Panc1 (cell line): ENCODE measurements at regions of chr4 and their contacts with region 1.

Region 1: DNA sequence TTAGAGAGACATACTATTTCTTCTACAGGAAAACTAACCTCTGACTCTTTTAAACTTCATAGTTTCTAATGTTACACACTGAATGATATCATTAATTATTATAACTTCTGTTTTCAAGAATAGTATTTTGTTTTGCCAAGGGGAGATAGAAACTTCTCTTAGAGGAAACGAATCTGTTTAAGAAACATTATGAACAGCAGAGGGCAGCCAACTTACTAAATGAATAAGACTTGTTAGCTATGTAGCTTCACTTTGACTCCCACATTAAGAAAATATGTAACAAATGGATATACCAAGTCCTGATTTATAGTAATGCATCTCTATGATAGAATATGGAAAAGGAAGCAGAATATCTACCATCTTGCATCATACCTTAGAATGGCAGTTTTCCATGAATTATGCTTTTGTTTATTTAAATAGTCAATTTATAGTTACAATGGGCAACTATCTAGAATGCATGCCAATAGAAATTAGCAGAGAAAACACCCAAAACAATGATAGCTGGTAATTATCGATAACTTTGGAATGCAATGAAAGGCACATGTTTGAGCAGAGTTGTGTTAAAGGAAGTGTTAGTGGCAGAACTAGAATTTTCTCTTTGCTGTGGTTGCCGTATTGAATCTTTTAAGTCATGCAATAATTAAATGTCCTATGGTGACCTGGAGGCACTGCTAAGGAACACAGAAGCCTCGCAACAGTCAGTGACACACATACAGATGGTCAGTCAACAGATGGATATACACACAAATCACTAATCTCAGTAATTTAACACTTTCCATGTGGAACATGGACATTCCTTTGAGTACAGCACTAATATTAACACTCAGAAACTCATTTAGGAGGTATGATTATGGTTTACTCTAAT is 105.7 kb upstream of the PDLIM3 start:
- DNase-seq: peak; percentile 10
- ATAC-seq: no peak
- H3K4me3 ChIP-seq: no peak overlapping the region
- H3K27ac ChIP-seq: no peak overlapping the region
- H3K4me1 ChIP-seq: no peaks in the 10 kb centered on the region
- H3K27me3 ChIP-seq: no peaks in the 10 kb centered on the region
- CTCF ChIP-seq: peak; percentile 37; the same call in 1 of the 2 replicates

Region 2: DNA sequence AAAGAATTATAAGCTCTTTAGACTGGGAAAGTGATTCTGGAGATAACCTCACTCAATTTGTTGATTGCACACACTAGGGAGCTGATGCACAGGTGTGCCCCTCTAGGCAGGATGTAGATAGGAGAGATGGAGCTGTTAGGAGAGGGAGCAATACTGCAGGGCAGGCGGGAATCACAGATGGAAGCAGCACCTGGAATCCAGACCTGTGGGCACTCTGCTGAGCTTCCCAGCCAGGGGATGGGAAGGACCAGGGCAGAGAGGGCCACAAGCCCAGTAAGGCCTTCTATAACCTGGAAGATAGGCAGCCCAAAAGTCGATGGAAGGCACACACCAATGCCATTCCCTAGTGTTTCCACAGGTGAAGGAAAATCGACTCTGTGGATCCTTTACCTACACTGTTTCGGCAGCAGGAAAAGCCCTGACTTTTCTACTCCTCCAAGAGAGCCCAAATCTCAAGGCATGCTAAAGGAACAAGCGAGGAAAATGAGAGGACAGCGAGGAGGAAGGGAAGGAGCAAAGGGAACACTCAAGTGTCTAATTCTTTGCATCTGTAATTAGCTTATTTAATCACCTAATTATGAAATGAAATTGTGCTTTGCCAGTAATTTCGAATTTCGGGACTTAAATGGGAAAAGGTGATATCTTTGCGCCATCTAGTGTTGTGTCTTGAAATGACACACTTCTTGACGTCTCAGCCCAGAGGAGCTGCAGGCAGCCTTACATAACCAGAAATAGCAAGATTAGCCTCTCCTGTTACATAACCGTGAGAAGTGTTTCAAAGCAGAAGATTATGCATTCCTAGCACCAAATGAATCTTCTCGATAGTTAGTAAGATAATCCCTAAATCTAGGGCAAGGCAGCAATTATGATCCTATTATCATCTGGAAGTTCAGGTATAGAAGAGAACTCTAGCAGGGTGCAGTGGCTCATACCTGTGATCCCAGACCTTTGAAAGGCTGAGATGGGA is 396.9 kb after region 1 on chr4:
- CTCF ChIA-PET with region 1: interaction called, 7 read pairs
- POLR2A ChIA-PET with region 1: no interaction called
- in situ Hi-C with region 1: no loop called
- intact Hi-C with region 1: loop called (anchors 5 kb)
- DNase-seq: peak; percentile 51
- ATAC-seq: peak; percentile 87
- H3K4me3 ChIP-seq: no peak overlapping the region
- H3K27ac ChIP-seq: no peak overlapping the region
- H3K4me1 ChIP-seq: peaks cover 4% of the 10 kb centered on the region; the same call in 1 of the 2 replicates
- H3K27me3 ChIP-seq: no peaks in the 10 kb centered on the region
- CTCF ChIP-seq: peak; percentile 68

Region 3: GRCh38 chr4:186458050-186458449 is 817.0 kb after region 1 on chr4:
- CTCF ChIA-PET with region 1: no interaction called
- POLR2A ChIA-PET with region 1: no interaction called
- in situ Hi-C with region 1: no loop called
- intact Hi-C with region 1: no loop called
- DNase-seq: no peak
- ATAC-seq: no peak
- H3K4me3 ChIP-seq: no peak overlapping the region
- H3K27ac ChIP-seq: no peak overlapping the region
- H3K4me1 ChIP-seq: no peaks in the 10 kb centered on the region
- H3K27me3 ChIP-seq: 0 out of 2 replicates have a peak, but pooled peaks cover 2% of the 10 kb centered on the region
- CTCF ChIP-seq: no peak